Astrocyte of the cerebellum (primary cell): ENCODE measurements at regions of chr6 and their contacts with region 1.

Region 1: GRCh38 chr6:40371621-40372020 is 215.5 kb downstream of the LRFN2 start:
- DNase-seq: no peak
- H3K4me3 ChIP-seq: no peak overlapping the region
- CTCF ChIP-seq: no peak

Region 2: DNA sequence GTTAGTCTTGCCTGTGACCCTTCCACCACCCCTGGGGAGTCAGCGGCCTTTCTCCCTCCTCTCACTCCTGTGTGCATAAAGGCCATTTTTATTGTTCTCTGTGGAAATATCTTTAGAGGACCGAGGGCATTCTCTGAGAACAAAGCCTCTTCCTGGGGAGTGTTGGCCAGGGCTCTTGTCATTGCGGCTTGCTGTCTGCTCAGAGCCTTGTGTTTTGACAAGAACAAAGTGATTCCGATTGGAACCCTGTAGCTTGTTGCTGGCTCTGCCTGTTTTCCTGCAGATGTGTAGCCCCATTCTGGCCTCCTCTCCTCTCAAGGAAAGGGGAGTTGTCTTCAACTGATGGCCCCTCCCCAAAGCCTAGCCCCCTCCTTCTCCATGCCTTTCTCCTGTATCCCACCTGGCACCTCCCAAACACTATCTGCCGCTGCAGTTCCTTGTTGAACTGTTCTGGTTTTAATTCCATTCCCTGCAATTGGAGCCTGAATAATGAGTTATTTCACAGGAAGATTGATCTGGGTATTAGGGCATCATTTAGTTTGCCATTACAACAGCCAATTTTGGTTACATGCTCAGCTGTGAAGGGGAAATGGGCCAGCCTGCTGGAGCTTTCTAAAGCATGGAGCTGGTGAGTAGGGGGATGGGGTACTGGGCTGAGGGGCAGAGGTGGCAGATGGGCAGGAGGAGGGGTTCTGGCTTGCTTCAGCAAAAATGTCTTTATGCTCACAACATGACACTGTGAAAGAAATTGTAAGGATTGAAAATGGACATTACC is 36.9 kb before region 1 on chr6:
- in situ Hi-C with region 1: loop called (anchors 5 kb)
- DNase-seq: no peak
- H3K4me3 ChIP-seq: no peak overlapping the region
- CTCF ChIP-seq: no peak